ENCODE measurements at regions of chr10 and their contacts with region 1.

Region 1: GRCh38 chr10:129963641-129964501 is at the start of gene EBF3:
- DNase-seq: peak; percentile 91
- ATAC-seq: peak; percentile 83 to 88 (median 86)
- H3K4me3 ChIP-seq: peak within 1 kb of the TSS; percentile 44 to 91 (median 73)
- H3K27ac ChIP-seq: peak within 1 kb of the TSS; percentile 80 to 94 (median 90)
- H3K4me1 ChIP-seq: peaks cover 2 to 24% (median 15%) of the 10 kb centered on the region in 9 donors
- H3K27me3 ChIP-seq: peaks cover 11 to 97% (median 83%) of the 10 kb centered on the region in 7 donors
- CTCF ChIP-seq: peak in 1 of 9 donors; percentile 18
- total RNA-seq, gene EBF3: 4.3 to 12.2 (median 5.6) TPM

Region 2: GRCh38 chr10:129056734-129057689 is 906.9 kb before region 1 on chr10:
- intact Hi-C with region 1: no loop called
- DNase-seq: no peak
- ATAC-seq: peak in 1 of 8 donors; percentile 34
- H3K4me3 ChIP-seq: no peak overlapping the region
- H3K27ac ChIP-seq: no peak overlapping the region
- H3K4me1 ChIP-seq: peaks cover 0 to 10% (median 0%) of the 10 kb centered on the region in 9 donors
- H3K27me3 ChIP-seq: peaks cover 0 to 4% (median 0%) of the 10 kb centered on the region in 7 donors
- CTCF ChIP-seq: no peak

Region 3: DNA sequence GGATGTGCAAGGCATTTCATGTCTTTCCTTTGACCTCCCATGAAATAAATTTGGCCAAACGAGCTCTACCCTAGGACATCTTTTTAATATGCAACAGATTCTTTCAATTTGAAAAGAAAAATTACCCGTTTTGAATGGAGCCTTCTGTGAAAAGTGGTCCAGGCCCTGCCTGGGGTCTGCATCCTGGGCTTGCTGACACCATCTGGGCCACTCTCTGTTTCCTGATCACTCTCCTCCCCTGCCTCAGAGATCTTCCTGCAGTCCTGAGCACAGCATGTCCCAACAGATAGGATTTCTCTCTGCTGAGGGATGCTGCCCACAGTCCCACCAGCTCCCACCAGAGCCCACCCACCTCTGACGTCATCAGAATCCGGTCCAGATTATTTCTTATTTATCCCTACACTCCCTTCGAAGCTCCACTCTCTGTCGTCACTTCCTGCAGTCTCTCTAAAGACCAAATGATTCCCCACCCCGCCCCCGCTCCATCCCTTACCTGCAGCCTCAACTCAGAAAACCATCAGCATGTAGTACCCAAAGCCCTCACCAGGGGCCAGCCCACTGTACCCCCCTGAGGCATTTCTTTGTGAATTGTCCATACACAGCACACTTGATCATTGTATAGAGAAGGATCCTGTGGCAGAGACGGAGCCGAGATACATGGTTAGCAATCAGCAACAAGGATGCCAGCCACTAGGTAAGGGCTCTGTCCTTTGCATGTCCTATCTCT is 689.0 kb before region 1 on chr10:
- intact Hi-C with region 1: loop called in 1 of 10 experiments (anchors 10 kb)
- DNase-seq: no peak
- ATAC-seq: peak in 1 of 8 donors; percentile 13
- H3K4me3 ChIP-seq: no peak overlapping the region
- H3K27ac ChIP-seq: no peak overlapping the region
- H3K4me1 ChIP-seq: peaks cover 0 to 14% (median 6%) of the 10 kb centered on the region in 9 donors
- H3K27me3 ChIP-seq: no peaks in the 10 kb centered on the region
- CTCF ChIP-seq: peak in 1 of 9 donors; percentile 11

Region 4: DNA sequence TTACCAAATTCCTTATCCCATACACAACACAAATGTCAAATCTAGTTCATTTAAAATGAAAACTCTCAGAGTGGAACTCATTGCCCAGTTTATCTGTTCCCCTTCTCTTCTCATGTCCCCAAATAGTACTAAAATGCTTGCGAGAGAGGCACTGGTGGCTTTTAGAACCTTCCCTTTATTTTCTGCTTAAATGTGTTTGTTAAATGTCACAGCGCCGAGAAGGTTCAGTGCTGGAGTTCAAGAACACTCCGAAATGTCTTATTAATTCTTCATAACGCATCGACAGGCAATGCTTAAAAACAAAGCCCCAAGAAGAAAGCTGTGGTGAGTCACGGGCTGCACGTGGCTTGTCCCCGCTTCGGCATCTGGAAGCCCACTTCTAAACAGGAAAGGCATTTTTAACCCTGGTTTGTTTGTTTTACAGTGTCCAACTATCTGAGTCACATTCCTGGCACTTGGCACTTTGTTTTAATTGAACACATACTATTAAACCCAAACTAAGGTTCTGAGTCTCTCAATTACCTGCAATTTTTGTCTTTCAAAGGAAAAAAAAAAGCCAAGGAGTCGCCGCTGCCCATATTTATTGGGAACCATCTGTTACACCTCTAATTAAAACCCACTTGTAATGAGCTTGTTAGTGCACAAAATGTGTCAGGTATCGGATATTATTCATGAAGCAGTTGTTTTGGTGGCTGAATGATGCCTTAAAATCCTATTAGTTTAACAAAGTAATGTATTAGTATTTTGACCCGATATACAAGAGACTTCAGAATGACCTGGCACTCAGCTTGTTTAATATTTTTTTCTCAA is 546.7 kb before region 1 on chr10:
- intact Hi-C with region 1: loop called in 1 of 10 experiments (anchors 10 kb)
- DNase-seq: no peak
- ATAC-seq: peak in 7 of 8 donors; percentile 47 to 80 (median 62)
- H3K4me3 ChIP-seq: no peak overlapping the region
- H3K27ac ChIP-seq: peak overlapping the region in 7 of 10 donors; percentile 8 to 53 (median 26)
- H3K4me1 ChIP-seq: peaks cover 0 to 39% (median 11%) of the 10 kb centered on the region in 9 donors
- H3K27me3 ChIP-seq: peaks cover 0 to 14% (median 7%) of the 10 kb centered on the region in 7 donors
- CTCF ChIP-seq: no peak

Region 5: DNA sequence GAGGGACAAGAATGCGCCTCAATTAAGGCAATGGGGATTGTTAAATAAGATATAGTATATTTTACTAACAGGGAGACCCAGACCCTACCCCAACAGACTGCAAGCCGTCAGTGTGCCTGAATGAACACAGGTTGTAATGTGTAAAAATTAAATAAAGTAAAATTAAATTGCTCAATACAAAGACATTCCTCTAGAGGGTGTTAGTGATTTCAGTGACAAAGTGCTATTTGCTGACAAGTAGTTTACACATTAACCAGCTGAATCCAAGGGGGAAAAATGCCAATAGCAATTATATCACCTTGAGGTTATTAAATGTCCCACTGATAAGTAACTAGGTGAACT is 110.3 kb before region 1 on chr10:
- intact Hi-C with region 1: loop called in 1 of 10 experiments (anchors 10 kb)
- DNase-seq: no peak
- ATAC-seq: peak in 1 of 8 donors; percentile 24
- H3K4me3 ChIP-seq: peak overlapping the region in 2 of 10 donors; percentile 2 to 10
- H3K27ac ChIP-seq: no peak overlapping the region
- H3K4me1 ChIP-seq: peaks cover 0 to 15% (median 0%) of the 10 kb centered on the region in 9 donors
- H3K27me3 ChIP-seq: no peaks in the 10 kb centered on the region
- CTCF ChIP-seq: peak in 7 of 9 donors; percentile 35 to 53 (median 42)

Region 6: DNA sequence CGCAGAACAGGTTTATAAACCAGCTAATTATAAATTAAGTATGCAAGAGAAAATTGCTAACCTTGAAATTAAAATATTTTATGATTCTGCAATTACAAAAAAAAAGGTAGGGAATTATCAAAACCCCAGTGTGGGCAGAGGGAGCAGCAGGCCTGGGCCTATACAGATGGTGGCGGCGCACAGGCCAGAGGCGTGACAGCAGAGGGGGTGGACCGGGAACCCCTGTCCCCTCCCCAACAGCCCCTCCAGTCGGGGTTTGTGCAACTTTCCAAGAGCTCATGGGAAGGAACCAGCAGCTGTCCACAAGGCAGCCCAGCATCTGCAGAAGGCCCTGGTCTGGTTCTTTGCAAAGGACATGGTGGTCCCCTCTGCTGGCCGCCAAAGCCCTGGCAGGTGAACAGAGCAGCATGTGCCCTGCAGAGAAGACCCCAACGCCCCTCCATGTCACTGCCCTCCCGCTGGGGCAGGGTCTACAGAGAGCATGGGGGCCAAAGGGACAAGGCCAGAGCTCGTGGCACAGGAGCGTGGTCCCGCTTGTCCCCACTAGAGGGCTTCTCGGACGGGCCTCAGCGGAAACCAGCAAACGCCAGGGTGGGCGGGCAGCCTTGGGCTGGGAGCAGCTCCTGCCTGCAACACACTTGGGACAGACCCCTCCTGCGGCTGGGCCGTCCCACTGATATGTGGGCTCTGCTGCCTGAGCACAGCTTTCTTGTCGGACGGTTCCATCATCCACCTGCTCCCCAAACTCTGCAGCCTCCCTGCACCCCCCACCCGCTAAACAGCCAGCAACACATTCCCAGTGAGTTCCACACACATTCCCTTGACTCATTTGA is 74.9 kb before region 1 on chr10:
- intact Hi-C with region 1: loop called in 9 of 10 experiments (anchors 2 to 10 kb)
- DNase-seq: peak; percentile 67 to 76
- ATAC-seq: peak; percentile 58 to 80 (median 74)
- H3K4me3 ChIP-seq: no peak overlapping the region
- H3K27ac ChIP-seq: peak overlapping the region in 3 of 10 donors; percentile 24 to 51 (median 44)
- H3K4me1 ChIP-seq: peaks cover 11 to 69% (median 37%) of the 10 kb centered on the region in 9 donors
- H3K27me3 ChIP-seq: no peaks in the 10 kb centered on the region
- CTCF ChIP-seq: peak; percentile 53 to 83 (median 74)